Activated CD4-positive, alpha-beta memory T cell treated with anti-CD3 and anti-CD28 coated beads, Interleukin-2, amount 10 ng/mL, durations not matched to agents 7 days and 5 days (primary cell): ENCODE measurements at regions of chr19 and their contacts with region 1.

Region 1: GRCh38 chr19:41795031-41795461 is 1.3 kb upstream of the CEACAM3 start:
- DNase-seq: peak; percentile 62
- H3K4me3 Mint-ChIP-seq: no peak overlapping the region
- H3K27ac Mint-ChIP-seq: no peak overlapping the region
- H3K4me1 Mint-ChIP-seq: no peaks in the 10 kb centered on the region
- H3K27me3 Mint-ChIP-seq: peaks cover 30% of the 10 kb centered on the region

Region 2: DNA sequence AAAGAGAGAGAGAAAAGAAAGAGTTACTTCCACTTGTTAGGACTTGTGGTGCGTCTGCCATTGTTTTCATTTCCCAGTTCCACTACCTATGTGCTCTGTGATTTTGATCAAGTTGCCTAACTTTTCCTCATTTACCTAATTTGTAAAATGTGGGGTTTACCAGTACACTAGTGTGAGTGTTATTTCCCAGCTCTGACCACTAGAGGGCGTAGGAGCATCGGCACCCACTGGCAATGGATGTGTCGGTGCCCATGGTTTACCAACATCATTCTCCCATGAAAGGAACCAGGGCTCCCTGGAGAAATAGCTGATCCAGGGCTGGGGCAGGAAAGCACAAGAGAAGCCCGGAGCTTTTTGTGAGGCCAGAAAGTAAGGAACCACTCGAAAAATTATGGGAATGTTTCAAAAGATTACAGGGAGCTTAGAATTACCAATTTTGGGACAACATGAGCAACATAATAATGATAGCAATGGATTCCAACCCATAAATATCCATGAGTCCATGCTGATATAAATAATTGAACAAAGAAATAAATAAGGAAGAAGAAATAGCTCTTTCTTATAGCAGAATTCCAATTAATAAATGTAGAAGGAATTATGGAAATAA is 153.1 kb before region 1 on chr19:
- CTCF ChIA-PET with region 1: interaction called, 10 read pairs
- POLR2A ChIA-PET with region 1: no interaction called
- DNase-seq: peak; percentile 67
- H3K4me3 Mint-ChIP-seq: no peak overlapping the region
- H3K27ac Mint-ChIP-seq: no peak overlapping the region
- H3K4me1 Mint-ChIP-seq: peaks cover 2% of the 10 kb centered on the region
- H3K27me3 Mint-ChIP-seq: peaks cover 18% of the 10 kb centered on the region

Region 3: GRCh38 chr19:41775360-41775695 is 19.7 kb before region 1 on chr19:
- CTCF ChIA-PET with region 1: interaction called, 10 read pairs
- POLR2A ChIA-PET with region 1: no interaction called
- DNase-seq: no peak
- H3K4me3 Mint-ChIP-seq: no peak overlapping the region
- H3K27ac Mint-ChIP-seq: no peak overlapping the region
- H3K4me1 Mint-ChIP-seq: peaks cover 27% of the 10 kb centered on the region
- H3K27me3 Mint-ChIP-seq: peaks cover 80% of the 10 kb centered on the region

Region 4: GRCh38 chr19:41821003-41821735 is 26.1 kb after region 1 on chr19:
- CTCF ChIA-PET with region 1: interaction called, 37 read pairs
- POLR2A ChIA-PET with region 1: interaction called, 3 read pairs
- DNase-seq: peak; percentile 47
- H3K4me3 Mint-ChIP-seq: no peak overlapping the region
- H3K27ac Mint-ChIP-seq: no peak overlapping the region
- H3K4me1 Mint-ChIP-seq: peaks cover 3% of the 10 kb centered on the region
- H3K27me3 Mint-ChIP-seq: peaks cover 32% of the 10 kb centered on the region

Region 5: DNA sequence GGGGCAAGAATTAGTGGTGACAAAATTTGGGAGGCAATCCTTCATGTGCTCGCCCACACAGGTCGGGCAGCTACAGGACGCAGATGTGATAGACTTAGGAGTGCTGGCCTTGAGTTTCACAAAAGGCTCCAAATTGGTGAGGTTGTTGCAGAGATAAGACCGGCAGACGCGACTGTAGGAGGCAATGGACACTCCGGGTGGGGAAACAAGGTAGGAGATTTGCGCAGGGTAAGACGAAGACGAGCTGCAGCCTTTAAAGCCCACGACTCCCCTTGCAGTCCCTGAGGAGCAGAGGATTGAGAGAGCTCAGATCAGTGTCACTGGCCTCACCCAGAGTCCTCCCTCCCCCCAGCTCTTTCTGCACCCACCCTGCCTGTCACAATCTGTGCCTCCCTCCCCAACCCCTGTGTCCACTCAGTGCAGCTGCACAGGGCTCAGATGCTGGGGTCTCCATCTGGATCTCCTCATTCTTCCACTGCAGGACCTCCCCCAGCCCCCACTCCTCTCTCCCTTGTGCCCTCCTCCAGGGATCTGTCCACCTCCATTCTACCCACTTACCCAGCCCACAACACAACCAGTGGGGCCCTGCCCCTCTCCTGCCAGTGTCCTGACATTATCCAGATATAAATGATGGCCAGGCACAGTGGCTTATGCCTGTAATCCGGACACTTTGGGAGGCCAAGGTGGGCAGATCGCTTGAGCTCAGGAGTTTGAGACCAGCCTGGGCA is 43.1 kb after region 1 on chr19:
- CTCF ChIA-PET with region 1: interaction called, 13 read pairs
- POLR2A ChIA-PET with region 1: no interaction called
- DNase-seq: no peak
- H3K4me3 Mint-ChIP-seq: no peak overlapping the region
- H3K27ac Mint-ChIP-seq: no peak overlapping the region
- H3K4me1 Mint-ChIP-seq: no peaks in the 10 kb centered on the region
- H3K27me3 Mint-ChIP-seq: peaks cover 27% of the 10 kb centered on the region

Region 6: GRCh38 chr19:41951686-41952172 is 156.7 kb after region 1 on chr19:
- CTCF ChIA-PET with region 1: interaction called, 11 read pairs
- POLR2A ChIA-PET with region 1: no interaction called
- DNase-seq: peak; percentile 88
- H3K4me3 Mint-ChIP-seq: no peak overlapping the region
- H3K27ac Mint-ChIP-seq: peak overlapping the region; percentile 19
- H3K4me1 Mint-ChIP-seq: peaks cover 16% of the 10 kb centered on the region
- H3K27me3 Mint-ChIP-seq: no peaks in the 10 kb centered on the region